ENCODE measurements at regions of chr2 and their contacts with region 1.

Region 1: DNA sequence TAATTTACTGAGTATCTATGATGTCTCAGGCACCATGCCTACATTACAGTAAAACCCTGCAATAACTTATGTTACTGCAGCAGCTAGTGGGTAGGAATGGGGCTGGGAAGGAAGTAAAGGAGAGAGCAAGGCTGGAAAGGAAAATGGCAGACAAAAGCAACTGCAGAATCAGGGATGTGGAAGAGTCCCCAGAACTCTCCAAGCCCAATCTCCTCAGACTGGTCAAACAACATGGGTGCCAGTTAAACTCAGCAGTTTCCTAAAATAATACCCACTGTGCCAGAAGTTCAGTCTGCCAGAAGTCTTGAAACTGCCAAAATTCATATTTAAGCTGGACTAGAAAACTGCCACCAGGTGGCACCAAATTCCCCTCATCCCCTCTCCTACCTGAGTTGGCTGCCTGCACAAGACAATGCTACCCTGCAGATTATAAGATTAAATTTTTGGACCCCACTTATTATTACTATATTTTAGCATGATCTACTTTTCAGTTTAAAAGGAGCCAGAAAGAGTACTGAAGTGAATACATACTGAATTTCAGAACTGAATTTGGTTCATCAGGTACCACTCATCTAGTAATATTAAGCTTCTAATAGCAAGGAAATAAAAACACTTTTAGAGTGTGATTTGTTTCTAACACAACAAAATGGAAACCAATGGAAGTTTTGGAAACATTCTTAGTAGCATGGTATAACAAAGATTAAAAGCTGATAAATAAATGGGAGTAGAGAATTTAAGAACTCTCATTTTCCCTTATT is 86.8 kb upstream of the DNER start:
- DNase-seq: peak; percentile 31 to 76
- ATAC-seq: peak; percentile 66

Region 2: GRCh38 chr2:229485857-229486256 is 315.3 kb before region 1 on chr2:
- intact Hi-C with region 1: no loop called
- DNase-seq: no peak
- ATAC-seq: no peak

Region 3: DNA sequence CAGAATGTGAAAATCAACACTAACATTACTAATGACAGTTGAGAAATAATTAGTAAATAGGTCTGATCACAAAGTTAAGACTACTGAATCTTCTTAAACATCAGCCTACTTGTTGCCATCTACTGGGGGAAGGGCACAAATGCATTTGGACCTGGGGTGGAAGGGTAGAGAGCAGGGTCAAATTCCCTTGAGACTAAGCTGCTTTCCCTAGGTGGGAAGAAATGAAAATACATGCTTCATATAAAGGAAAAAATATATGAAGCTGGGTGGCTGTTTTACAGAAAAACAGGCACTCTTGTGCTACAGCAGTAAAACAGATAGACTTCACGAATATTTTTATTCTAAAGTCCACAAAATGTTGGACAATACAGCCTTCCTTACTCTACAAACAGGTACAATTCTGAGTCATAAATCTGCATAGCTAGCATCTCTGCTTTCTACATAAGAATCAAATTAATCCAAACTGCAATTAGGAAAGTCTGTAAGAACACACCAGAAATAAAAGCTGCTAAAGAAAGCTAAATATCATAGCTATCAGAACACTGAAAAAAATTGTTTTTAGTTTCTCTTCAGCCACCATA is 109.7 kb after region 1 on chr2:
- intact Hi-C with region 1: loop called in 1 of 2 experiments (anchors 10 kb)
- DNase-seq: no peak
- ATAC-seq: peak; percentile 75

Region 4: DNA sequence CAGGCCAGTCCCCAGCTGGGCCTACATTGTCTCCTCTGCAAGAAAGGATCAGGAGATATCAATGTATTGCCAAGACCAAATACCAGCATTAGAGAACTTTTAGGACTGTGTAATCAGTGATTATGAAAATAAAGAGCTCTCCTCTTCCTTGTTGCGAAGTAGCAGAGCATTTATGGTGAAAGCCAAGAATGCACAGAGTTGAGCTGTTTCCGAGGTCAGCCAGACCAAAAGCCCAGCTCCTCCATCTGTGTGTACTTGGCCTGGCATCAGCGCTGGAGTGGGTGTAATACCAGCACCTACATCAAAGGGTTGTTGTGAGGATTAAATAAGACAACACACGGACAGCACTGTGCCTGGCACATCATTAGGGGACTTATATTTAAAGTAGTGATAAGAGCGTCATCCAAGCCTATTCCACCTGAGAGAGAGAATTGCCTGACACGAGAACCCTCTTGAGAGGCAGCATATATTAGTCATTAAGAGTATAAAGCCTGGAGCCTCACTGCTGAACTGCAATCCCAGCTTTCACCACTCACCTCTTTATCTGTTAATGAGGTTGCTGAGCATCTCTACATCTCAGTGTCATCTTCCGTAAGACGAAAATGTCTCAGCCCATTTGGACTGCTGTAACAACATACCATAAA is 274.9 kb after region 1 on chr2:
- intact Hi-C with region 1: no loop called
- DNase-seq: no peak
- ATAC-seq: no peak